Mammary epithelial cell (primary cell): ENCODE measurements at regions of chr22 and their contacts with region 1.

Region 1: GRCh38 chr22:30931541-30932300 is 36.9 kb downstream of the MORC2 start:
- DNase-seq: no peak
- H3K4me3 ChIP-seq: no peak overlapping the region
- H3K27ac ChIP-seq: no peak overlapping the region
- H3K4me1 ChIP-seq: no peaks in the 10 kb centered on the region
- H3K27me3 ChIP-seq: no peaks in the 10 kb centered on the region
- CTCF ChIP-seq: no peak

Region 2: DNA sequence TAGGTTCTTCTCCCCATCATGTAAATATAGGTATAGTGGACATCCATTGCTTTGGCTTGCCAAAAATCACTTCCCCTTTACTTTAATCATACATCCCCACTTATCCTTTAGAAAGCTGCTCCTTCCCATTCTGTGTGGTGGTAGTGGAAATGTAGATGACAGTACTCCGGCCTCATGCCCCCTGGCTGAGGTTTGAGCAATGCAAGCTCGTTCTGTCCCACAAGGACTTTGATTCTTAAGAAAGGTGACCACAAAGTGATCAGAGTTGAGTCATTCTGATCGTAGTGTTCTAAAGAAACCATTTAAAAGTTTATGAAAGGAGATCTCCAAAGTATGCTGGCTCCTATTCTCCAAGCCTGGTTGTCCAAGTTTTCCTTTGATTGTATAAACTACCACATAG is 48.2 kb after region 1 on chr22:
- CTCF ChIA-PET with region 1: no interaction called
- dilution Hi-C with region 1: loop called (anchors 5 kb)
- in situ Hi-C with region 1: no loop called
- intact Hi-C with region 1: no loop called
- DNase-seq: no peak
- H3K4me3 ChIP-seq: no peak overlapping the region
- H3K27ac ChIP-seq: no peak overlapping the region
- H3K4me1 ChIP-seq: no peaks in the 10 kb centered on the region
- H3K27me3 ChIP-seq: no peaks in the 10 kb centered on the region
- CTCF ChIP-seq: no peak

Region 3: DNA sequence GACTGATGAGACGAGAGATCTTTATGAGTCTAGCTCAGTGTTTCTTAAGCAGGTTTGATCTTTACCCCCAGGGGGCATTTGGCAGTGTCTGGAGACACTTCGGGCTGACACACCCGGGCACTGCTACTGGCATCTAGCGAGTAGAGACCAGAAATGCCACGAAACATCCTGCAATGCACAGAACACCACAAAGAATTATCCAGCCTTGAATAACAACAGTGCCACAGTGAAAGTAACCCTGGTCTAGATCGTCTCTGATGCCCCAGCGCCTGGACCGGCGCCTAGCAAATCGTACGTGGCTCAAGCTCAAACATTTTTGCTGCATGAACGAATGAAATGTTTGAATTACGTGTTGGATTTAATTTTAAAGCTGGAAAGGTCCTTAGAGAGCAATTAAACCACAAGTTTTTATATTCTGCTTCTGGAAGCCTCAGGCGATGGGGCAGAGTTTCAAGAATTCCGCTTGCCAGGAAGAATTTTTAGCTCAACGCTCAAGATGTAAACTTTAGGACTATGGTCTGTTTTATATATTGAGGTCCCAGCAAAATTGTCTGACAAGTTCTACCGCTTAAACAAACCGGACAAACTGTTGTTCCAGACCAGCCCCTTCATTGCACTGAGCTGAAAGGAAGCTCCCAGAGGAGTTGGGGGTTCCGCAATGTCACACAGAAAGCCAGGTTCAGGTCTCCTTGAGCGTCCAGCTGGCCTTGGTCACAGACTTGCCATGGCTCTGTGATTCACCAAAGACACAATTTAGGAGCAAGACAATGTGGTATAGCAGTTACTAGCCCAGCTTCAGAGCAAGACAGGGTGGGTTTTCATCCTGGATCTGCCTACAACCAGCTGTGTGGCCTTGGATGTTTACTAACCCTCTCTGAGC is 105.2 kb after region 1 on chr22:
- CTCF ChIA-PET with region 1: no interaction called
- dilution Hi-C with region 1: loop called (anchors 5 kb)
- in situ Hi-C with region 1: no loop called
- intact Hi-C with region 1: no loop called
- DNase-seq: peak; percentile 67
- H3K4me3 ChIP-seq: peak overlapping the region in 2 of 3 experiments; percentile 17 to 18
- H3K27ac ChIP-seq: no peak overlapping the region
- H3K4me1 ChIP-seq: peaks cover 11% of the 10 kb centered on the region
- H3K27me3 ChIP-seq: no peaks in the 10 kb centered on the region
- CTCF ChIP-seq: peak; percentile 12 to 46

Region 4: DNA sequence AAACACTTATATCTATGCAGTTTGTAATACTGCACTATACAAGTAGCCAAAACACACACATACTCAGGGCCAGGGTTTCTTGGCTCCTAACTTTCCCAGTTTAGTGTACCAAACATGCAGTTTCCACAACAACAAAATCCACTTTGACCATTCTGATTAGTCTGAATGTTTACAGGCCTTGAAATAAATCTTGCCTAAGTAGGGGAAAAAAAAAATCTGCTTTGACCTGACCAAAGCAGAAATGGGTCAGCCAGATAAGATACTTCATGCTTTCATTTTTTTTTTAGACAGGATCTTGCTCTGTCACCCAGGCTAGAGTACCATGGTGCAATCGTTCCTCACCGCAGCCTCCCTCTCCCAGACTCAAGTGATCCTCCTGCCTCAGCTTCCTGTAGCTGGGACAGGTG is 808.1 kb after region 1 on chr22:
- CTCF ChIA-PET with region 1: no interaction called
- dilution Hi-C with region 1: no loop called
- in situ Hi-C with region 1: no loop called
- intact Hi-C with region 1: no loop called
- DNase-seq: no peak
- H3K4me3 ChIP-seq: no peak overlapping the region
- H3K27ac ChIP-seq: no peak overlapping the region
- H3K4me1 ChIP-seq: peaks cover 3% of the 10 kb centered on the region
- H3K27me3 ChIP-seq: no peaks in the 10 kb centered on the region
- CTCF ChIP-seq: no peak